ENCODE measurements at regions of chr20 and their contacts with region 1.

Region 1: DNA sequence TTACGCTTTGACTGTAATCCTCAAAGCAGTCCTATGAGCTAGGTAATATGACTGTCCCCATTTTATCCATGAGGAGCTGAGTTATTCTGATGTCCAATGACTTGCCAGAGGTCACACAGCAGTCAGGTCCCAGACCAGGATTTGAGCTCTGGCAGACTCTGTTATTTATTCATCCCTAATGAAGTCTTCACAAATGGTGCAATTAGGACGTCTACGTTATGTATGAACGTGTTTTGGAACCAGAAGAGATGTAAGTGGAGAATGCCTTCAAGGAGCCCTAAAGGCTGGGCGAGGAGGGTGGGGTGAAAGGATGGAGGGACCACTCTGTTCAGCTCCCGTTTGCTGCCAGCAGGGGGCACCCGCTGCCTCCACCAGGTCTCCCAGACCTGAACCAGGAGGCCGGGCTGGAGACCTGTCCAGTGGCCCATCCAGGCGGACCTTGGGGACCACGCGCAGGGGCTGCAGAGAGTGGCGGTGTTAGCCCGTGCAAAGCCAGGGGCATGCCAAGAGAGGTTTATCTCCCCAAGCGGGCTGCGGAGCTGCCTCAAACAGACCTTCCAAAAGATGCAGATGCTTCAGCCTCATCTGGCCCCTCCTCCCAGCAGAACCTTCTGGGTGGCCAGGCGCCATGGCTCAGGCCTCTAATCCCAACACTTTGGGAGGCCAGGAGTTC is 15.2 kb upstream of the ZNF335 start:
- DNase-seq: peak; percentile 67 to 76 (median 70)
- H3K4me3 ChIP-seq: no peak overlapping the region
- H3K4me3 Mint-ChIP-seq: no peak overlapping the region
- H3K27ac ChIP-seq: no peak overlapping the region
- H3K27ac Mint-ChIP-seq: no peak overlapping the region
- H3K4me1 ChIP-seq: no peaks in the 10 kb centered on the region
- H3K4me1 Mint-ChIP-seq: peaks cover 0 to 4% (median 3%) of the 10 kb centered on the region in 4 donors
- H3K27me3 ChIP-seq: no peaks in the 10 kb centered on the region
- H3K27me3 Mint-ChIP-seq: no peaks in the 10 kb centered on the region

Region 2: GRCh38 chr20:45576995-45577394 is 410.2 kb before region 1 on chr20:
- CTCF ChIA-PET with region 1: no interaction called
- POLR2A ChIA-PET with region 1: no interaction called
- intact Hi-C with region 1: no loop called
- DNase-seq: no peak
- H3K4me3 ChIP-seq: no peak overlapping the region
- H3K4me3 Mint-ChIP-seq: no peak overlapping the region
- H3K27ac ChIP-seq: no peak overlapping the region
- H3K27ac Mint-ChIP-seq: no peak overlapping the region
- H3K4me1 ChIP-seq: no peaks in the 10 kb centered on the region
- H3K4me1 Mint-ChIP-seq: no peaks in the 10 kb centered on the region
- H3K27me3 ChIP-seq: no peaks in the 10 kb centered on the region
- H3K27me3 Mint-ChIP-seq: peaks cover 9 to 16% of the 10 kb centered on the region in 2 donors

Region 3: DNA sequence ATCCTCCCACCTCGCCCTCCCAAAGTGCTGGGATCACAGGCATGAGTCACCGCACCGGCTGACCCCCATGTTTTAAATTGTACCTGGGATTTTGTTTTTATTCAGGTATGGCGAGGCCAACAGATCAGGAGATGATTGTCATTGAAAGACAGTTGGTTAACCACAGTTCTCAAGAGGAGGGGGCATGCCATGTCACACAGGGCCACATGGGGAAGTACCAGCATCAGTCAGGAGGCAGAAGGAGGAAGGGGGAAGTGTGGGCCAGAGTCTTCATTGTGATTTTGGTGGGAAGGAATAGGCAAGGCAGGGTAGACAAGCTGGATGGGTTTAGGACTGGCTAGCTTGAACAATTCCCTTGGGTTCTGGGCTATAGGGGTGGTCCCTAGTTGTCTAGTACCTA is 11.5 kb after region 1 on chr20:
- CTCF ChIA-PET with region 1: interaction called, 44 read pairs
- POLR2A ChIA-PET with region 1: interaction called, 9 read pairs
- intact Hi-C with region 1: no loop called
- DNase-seq: peak in 3 of 5 donors; percentile 23 to 70 (median 41)
- H3K4me3 ChIP-seq: no peak overlapping the region
- H3K4me3 Mint-ChIP-seq: peak overlapping the region in 7 of 8 donors; percentile 3 to 92 (median 21)
- H3K27ac ChIP-seq: no peak overlapping the region
- H3K27ac Mint-ChIP-seq: peak overlapping the region; percentile 0 to 92 (median 28)
- H3K4me1 ChIP-seq: peaks cover 64% of the 10 kb centered on the region
- H3K4me1 Mint-ChIP-seq: peaks cover 40 to 82% (median 60%) of the 10 kb centered on the region in 4 donors
- H3K27me3 ChIP-seq: no peaks in the 10 kb centered on the region
- H3K27me3 Mint-ChIP-seq: no peaks in the 10 kb centered on the region

Region 4: GRCh38 chr20:46004889-46005473 is 17.7 kb after region 1 on chr20:
- CTCF ChIA-PET with region 1: interaction called, 44 read pairs
- POLR2A ChIA-PET with region 1: interaction called, 9 read pairs
- intact Hi-C with region 1: no loop called
- DNase-seq: peak; percentile 41 to 74 (median 57)
- H3K4me3 ChIP-seq: peak overlapping the region in 1 of 2 donors; percentile 17
- H3K4me3 Mint-ChIP-seq: peak overlapping the region; percentile 50 to 88 (median 80)
- H3K27ac ChIP-seq: no peak overlapping the region
- H3K27ac Mint-ChIP-seq: peak overlapping the region; percentile 75 to 93 (median 77)
- H3K4me1 ChIP-seq: peaks cover 82% of the 10 kb centered on the region
- H3K4me1 Mint-ChIP-seq: peaks cover 61 to 87% (median 74%) of the 10 kb centered on the region in 4 donors
- H3K27me3 ChIP-seq: no peaks in the 10 kb centered on the region
- H3K27me3 Mint-ChIP-seq: peaks cover 1 to 16% of the 10 kb centered on the region in 2 donors

Region 5: DNA sequence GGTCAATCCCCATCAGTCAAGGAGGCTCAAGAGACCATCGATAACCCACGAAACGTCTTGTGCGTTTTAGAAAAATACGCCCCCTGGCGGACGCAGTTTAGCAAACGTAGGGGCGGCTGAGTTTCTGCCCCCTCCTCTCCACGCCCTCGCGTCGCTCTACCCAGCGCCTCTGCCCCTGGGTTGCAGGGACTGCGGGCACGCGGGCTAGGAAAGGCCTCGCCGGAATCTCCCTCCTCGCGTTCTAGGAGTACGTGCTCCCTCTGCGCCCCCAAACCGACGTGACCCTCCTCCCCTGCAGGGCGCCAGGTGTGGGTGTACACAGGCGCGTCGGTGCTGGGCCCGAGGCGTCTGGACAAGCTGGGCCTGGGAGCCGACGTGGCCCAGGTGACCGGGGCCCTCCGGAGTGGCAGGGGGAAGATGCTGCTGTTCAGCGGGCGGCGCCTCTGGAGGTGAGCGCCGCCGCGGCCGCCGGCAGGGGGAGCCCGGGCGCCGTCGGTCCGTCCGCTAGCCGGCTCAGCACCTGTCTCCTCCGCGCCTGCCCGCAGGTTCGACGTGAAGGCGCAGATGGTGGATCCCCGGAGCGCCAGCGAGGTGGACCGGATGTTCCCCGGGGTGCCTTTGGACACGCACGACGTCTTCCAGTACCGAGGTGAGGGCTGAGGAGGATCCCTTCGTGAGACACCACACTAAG is 26.7 kb after region 1 on chr20:
- CTCF ChIA-PET with region 1: interaction called, 150 read pairs
- POLR2A ChIA-PET with region 1: interaction called, 10 read pairs
- intact Hi-C with region 1: loop called (anchors 1 kb)
- DNase-seq: peak; percentile 59 to 82 (median 64)
- H3K4me3 ChIP-seq: peak overlapping the region in 1 of 2 donors; percentile 33
- H3K4me3 Mint-ChIP-seq: peak overlapping the region; percentile 45 to 81 (median 64)
- H3K27ac ChIP-seq: no peak overlapping the region
- H3K27ac Mint-ChIP-seq: peak overlapping the region in 3 of 7 donors; percentile 54 to 78 (median 57)
- H3K4me1 ChIP-seq: peaks cover 50% of the 10 kb centered on the region
- H3K4me1 Mint-ChIP-seq: peaks cover 25 to 67% (median 45%) of the 10 kb centered on the region in 4 donors
- H3K27me3 ChIP-seq: peaks cover 30% of the 10 kb centered on the region
- H3K27me3 Mint-ChIP-seq: peaks cover 26 to 61% of the 10 kb centered on the region in 2 donors

Measured in CD4-positive, alpha-beta memory T cell (primary cell).